ENCODE measurements at regions of chr14 and their contacts with region 1.

Region 1: GRCh38 chr14:53807542-53807941 is 149.1 kb downstream of the BMP4 start:
- DNase-seq: peak; percentile 8
- ATAC-seq: no peak
- H3K4me3 ChIP-seq: no peak overlapping the region
- H3K27ac ChIP-seq: no peak overlapping the region
- H3K4me1 ChIP-seq: no peaks in the 10 kb centered on the region
- H3K27me3 ChIP-seq: no peaks in the 10 kb centered on the region
- CTCF ChIP-seq: no peak
- EP300 ChIP-seq: no peak
- POLR2A ChIP-seq: no peak
- RAD21 ChIP-seq: no peak

Region 2: DNA sequence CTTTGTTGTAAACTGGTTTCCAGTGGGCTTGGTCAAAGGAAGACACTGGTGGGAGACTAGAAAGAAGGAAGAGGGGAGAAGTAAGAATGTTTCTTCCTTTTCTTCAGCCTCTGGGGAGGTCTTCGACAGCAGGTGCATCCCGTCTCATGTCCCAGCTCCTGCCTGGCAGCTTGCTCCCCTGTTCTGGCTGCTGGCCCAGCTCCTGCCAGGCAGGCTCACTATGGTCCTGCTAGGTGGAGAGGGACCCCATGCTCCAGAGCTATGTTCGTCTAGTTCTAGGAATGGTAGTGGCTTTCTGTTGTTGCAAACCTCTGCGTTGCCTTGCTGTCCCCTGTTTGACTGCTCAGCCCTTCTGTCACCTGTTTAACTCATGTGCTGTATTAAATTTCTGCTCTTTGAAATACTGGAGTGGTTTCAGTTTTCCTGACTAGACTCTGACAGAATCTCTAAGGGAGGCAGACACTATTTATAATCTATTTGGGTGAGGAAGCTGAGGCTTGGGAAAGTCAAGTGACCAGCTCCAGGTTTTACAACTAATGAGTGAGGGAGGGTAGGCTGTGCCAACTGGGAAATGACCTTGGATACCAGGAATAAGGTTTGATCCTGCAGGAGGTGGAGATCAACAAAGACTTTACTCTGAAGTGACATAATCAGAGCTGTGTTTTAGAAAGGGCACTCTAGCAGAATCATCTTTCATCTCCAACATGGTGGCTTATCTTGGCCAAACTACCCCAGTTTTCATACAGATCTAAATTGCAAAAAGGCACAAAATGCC is 559.8 kb before region 1 on chr14:
- CTCF ChIA-PET with region 1: no interaction called
- POLR2A ChIA-PET with region 1: no interaction called
- in situ Hi-C with region 1: no loop called
- intact Hi-C with region 1: loop called (anchors 5 kb)
- DNase-seq: no peak
- ATAC-seq: no peak
- H3K4me3 ChIP-seq: no peak overlapping the region
- H3K27ac ChIP-seq: no peak overlapping the region
- H3K4me1 ChIP-seq: no peaks in the 10 kb centered on the region
- H3K27me3 ChIP-seq: peaks cover 0 to 7% of the 10 kb centered on the region in 2 experiments; a peak in 2 of 5 replicates
- CTCF ChIP-seq: no peak
- EP300 ChIP-seq: no peak
- POLR2A ChIP-seq: no peak
- RAD21 ChIP-seq: no peak

Region 3: GRCh38 chr14:53778263-53778662 is 29.3 kb before region 1 on chr14:
- CTCF ChIA-PET with region 1: no interaction called
- POLR2A ChIA-PET with region 1: no interaction called
- in situ Hi-C with region 1: no loop called
- intact Hi-C with region 1: loop called (anchors 2 kb)
- DNase-seq: no peak
- ATAC-seq: no peak
- H3K4me3 ChIP-seq: no peak overlapping the region
- H3K27ac ChIP-seq: no peak overlapping the region
- H3K4me1 ChIP-seq: no peaks in the 10 kb centered on the region
- H3K27me3 ChIP-seq: no peaks in the 10 kb centered on the region
- CTCF ChIP-seq: no peak
- EP300 ChIP-seq: no peak
- POLR2A ChIP-seq: no peak
- RAD21 ChIP-seq: no peak

Measured in HepG2 (cell line).